Calu3 (cell line): ENCODE measurements at regions of chr1 and their contacts with region 1.

Region 1: DNA sequence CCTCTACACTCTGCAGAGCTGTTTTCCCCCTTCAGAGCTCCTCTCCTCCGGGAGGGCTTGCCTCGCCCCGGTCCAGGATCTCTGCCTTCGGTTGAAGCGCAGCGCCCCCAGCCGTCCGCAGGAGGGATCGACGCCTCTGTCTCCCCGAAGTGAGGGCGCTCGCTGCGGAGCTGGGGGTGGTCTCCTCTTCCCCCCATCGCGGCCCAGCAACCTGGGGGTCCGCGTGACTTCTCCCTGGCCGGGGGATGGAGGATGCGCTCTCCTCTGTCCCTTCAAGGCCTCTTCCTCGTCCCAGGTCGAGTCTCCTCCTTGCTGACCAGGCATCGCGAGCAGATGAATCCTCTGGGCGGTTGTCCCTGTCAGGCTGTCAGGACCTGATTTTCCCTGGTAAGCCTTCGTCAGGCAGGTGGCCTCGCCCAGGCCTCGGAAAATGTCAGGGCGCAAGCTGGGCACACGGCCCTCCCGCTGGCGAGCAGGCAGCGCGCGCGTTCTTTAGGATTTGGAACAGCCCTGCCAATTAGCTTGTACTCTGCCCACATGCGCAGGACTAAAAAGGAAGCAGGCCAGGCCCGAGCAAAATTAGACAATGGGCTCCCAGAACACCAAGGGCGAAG is 90.5 kb downstream of the EDEM3 start:
- DNase-seq: peak; percentile 85
- H3K4me3 Mint-ChIP-seq: peak overlapping the region; percentile 76
- H3K27ac Mint-ChIP-seq: no peak overlapping the region
- H3K4me1 Mint-ChIP-seq: peaks cover 11% of the 10 kb centered on the region
- H3K27me3 Mint-ChIP-seq: no peaks in the 10 kb centered on the region
- CTCF ChIP-seq: peak; percentile 98

Region 2: DNA sequence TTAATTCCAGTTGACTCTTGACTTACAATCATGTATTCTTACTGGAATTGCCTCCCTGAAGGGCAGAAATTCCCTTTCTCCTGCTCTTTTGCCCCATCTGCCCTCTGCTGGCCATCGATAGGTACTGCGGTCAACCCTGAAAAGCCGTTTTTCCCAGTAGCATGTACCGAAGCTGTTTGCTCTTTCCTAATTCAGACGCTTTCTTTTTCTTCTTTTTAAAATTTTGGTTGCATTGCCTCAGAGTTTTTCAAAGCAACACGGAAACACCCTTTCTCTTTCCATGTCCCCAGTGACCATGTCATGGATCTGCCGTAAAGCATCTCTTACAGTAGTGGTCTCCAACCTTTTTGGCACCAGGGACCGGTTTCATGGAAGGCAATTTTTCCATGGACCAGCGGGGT is 441.5 kb before region 1 on chr1:
- CTCF ChIA-PET with region 1: interaction called, 10 read pairs
- intact Hi-C with region 1: loop called (anchors 2 kb)
- DNase-seq: peak; percentile 78
- H3K4me3 Mint-ChIP-seq: peak overlapping the region; percentile 39
- H3K27ac Mint-ChIP-seq: no peak overlapping the region
- H3K4me1 Mint-ChIP-seq: no peaks in the 10 kb centered on the region
- H3K27me3 Mint-ChIP-seq: peaks cover 27% of the 10 kb centered on the region
- CTCF ChIP-seq: peak; percentile 97

Region 3: GRCh38 chr1:184315254-184315653 is 348.9 kb before region 1 on chr1:
- CTCF ChIA-PET with region 1: interaction called, 4 read pairs
- intact Hi-C with region 1: loop called (anchors 1 kb)
- DNase-seq: no peak
- H3K4me3 Mint-ChIP-seq: no peak overlapping the region
- H3K27ac Mint-ChIP-seq: no peak overlapping the region
- H3K4me1 Mint-ChIP-seq: peaks cover 3% of the 10 kb centered on the region
- H3K27me3 Mint-ChIP-seq: no peaks in the 10 kb centered on the region
- CTCF ChIP-seq: no peak

Region 4: GRCh38 chr1:184386312-184387068 is 277.7 kb before region 1 on chr1 and contains the start of gene C1orf21:
- CTCF ChIA-PET with region 1: interaction called, 40 read pairs
- intact Hi-C with region 1: no loop called
- DNase-seq: peak; percentile 93
- H3K4me3 Mint-ChIP-seq: peak within 1 kb of the TSS; percentile 76
- H3K27ac Mint-ChIP-seq: peak within 1 kb of the TSS; percentile 19
- H3K4me1 Mint-ChIP-seq: peaks cover 19% of the 10 kb centered on the region
- H3K27me3 Mint-ChIP-seq: no peaks in the 10 kb centered on the region
- CTCF ChIP-seq: no peak
- total RNA-seq, gene C1orf21: 16.9 and 20.6 TPM in 2 replicates

Region 5: GRCh38 chr1:184513966-184514365 is 150.2 kb before region 1 on chr1:
- CTCF ChIA-PET with region 1: interaction called, 8 read pairs
- intact Hi-C with region 1: loop called (anchors 10 kb)
- DNase-seq: peak; percentile 37
- H3K4me3 Mint-ChIP-seq: no peak overlapping the region
- H3K27ac Mint-ChIP-seq: no peak overlapping the region
- H3K4me1 Mint-ChIP-seq: no peaks in the 10 kb centered on the region
- H3K27me3 Mint-ChIP-seq: no peaks in the 10 kb centered on the region
- CTCF ChIP-seq: no peak

Region 6: DNA sequence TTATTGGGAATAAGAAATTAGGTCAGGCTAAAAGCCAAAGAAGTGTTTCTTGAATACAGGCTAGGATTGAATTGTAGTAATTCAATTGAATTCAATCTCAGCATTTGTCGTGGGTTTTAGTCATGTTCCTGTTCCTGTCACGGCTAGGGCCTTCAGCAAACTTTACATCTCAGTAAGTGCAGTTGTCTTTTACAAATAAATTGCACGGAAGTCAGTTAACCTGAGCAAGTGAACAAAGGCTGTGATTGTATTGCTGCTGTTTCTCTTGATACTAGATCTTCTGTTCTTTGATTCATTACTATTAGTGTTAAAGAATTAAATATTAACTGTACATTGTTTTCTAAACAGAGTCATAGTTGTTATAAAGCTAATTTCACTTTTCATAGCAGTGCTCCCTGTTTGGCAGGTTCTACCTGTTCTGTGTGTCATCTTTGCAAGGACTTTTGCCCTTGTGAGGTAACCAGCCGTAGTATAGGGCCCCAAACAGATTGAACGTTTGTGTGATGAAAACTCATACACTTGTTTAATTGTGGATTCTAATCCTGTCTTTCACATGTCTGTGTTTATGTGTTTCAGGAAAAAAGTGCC is 73.9 kb before region 1 on chr1:
- CTCF ChIA-PET with region 1: interaction called, 15 read pairs
- intact Hi-C with region 1: loop called (anchors 5 kb)
- DNase-seq: peak; percentile 88
- H3K4me3 Mint-ChIP-seq: peak overlapping the region; percentile 54
- H3K27ac Mint-ChIP-seq: peak overlapping the region; percentile 96
- H3K4me1 Mint-ChIP-seq: peaks cover 82% of the 10 kb centered on the region
- H3K27me3 Mint-ChIP-seq: no peaks in the 10 kb centered on the region
- CTCF ChIP-seq: no peak

Region 7: DNA sequence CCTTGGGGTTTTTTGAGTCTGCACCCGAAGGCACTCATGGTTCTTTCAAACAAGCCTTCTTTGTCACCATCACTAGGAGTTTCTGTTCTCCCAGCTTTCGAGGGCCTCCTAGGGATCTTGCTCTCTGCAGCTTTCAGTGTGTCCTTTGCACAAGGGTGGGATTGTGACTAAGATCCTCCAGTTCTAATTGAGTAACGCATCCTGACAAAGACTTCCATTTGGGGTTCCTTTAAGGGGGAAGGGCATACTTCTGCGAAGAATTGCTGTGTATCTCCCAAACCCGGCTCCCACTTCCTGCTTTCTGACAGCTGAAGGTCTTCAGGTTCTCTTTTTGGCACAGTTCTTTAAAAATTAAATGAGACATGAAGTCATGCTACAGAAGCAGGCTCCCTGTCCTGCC is 48.8 kb before region 1 on chr1:
- CTCF ChIA-PET with region 1: no interaction called
- intact Hi-C with region 1: no loop called
- DNase-seq: no peak
- H3K4me3 Mint-ChIP-seq: no peak overlapping the region
- H3K27ac Mint-ChIP-seq: no peak overlapping the region
- H3K4me1 Mint-ChIP-seq: no peaks in the 10 kb centered on the region
- H3K27me3 Mint-ChIP-seq: no peaks in the 10 kb centered on the region
- CTCF ChIP-seq: no peak